ENCODE measurements at regions of chr1 and their contacts with region 1.

Region 1: GRCh38 chr1:112390775-112391602 is 5.0 kb upstream of the CTTNBP2NL start:
- DNase-seq: peak; percentile 83 to 93 (median 86)
- ATAC-seq: peak; percentile 89 to 94 (median 92)
- H3K4me3 ChIP-seq: peak overlapping the region in 3 of 4 donors; percentile 11 to 38 (median 37)
- H3K27ac ChIP-seq: peak overlapping the region in 3 of 4 donors; percentile 32 to 52 (median 45)
- H3K4me1 ChIP-seq: peaks cover 0 to 21% (median 7%) of the 10 kb centered on the region in 3 donors
- H3K27me3 ChIP-seq: no peaks in the 10 kb centered on the region
- CTCF ChIP-seq: peak; percentile 85 to 90 (median 86)

Region 2: DNA sequence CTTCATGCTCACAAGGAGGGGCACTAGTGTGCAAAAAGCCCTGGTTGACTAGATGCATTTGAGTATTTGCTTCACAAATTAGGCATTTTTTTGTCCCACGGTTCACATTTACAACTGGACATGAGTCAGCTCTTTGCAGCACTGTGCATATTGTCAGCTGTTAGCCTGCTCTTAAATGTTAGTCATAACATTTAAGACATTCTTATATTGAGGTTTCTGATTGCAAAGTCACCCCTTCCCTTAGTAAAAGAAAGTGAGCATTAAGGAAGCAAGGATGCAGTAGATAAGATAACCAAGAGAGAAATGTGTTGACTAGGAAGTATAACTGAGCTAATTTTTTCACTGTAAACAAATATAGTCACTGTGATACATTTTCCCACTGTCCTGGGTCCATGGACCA is 127.5 kb before region 1 on chr1:
- intact Hi-C with region 1: no loop called
- DNase-seq: no peak
- ATAC-seq: peak in 2 of 4 donors; percentile 34 to 48
- H3K4me3 ChIP-seq: no peak overlapping the region
- H3K27ac ChIP-seq: no peak overlapping the region
- H3K4me1 ChIP-seq: no peaks in the 10 kb centered on the region
- H3K27me3 ChIP-seq: no peaks in the 10 kb centered on the region
- CTCF ChIP-seq: no peak

Region 3: DNA sequence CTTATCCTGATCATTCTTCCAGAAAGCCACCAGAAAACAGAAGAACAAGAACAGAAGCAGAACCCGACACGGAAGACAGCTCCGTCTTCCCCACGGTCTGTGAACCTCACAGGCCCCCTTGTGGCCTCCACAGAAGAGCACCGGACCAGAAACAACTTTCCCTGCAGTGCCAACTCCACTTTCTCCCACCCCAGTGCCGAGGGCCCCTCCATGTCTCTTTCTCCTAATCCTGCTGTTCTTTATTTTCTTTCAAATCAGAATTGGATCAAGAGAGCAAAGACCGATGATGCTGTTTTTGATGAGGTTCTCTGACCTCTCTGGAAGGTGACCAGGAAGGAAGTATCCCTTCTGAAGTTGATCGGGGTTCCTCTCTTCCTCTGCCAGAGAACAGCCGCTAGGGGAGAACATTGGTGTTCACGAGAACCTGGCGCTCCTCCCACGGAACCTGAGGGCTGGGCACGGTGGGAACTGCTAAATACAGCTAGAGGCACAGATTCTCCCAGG is 53.9 kb before region 1 on chr1:
- intact Hi-C with region 1: no loop called
- DNase-seq: peak; percentile 17 to 62 (median 44)
- ATAC-seq: peak; percentile 86 to 95 (median 92)
- H3K4me3 ChIP-seq: peak overlapping the region in 1 of 4 donors; percentile 17
- H3K27ac ChIP-seq: no peak overlapping the region
- H3K4me1 ChIP-seq: no peaks in the 10 kb centered on the region
- H3K27me3 ChIP-seq: no peaks in the 10 kb centered on the region
- CTCF ChIP-seq: peak; percentile 15 to 53 (median 42)

Region 4: DNA sequence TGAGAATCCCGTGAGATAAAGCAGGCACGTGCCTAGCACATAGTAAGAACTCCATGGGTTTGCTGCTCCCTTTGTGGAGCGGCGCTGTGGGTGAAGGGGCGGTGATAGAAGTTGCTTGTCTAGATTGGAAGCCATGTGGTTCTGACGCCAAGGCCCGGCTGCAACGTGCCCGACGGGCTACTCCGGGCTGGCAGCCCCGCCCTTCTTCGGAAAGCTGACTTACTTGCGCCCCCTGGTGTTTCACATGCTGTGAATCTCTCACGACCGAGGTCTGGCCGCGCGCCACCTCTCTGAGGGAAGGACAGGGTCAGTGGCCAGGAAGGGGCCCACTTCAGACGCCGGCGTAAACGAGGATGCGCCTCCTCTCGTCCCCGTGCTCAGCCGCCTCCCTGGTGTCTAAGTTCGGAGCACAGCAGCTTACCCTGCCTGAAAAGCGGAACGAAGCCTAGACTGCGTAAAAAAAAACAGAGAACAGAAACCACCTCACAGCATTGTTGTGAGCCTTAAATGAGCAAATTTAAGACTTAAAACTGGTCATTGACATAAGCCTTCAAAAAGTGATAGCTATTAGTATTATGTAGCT is 75.2 kb after region 1 on chr1:
- intact Hi-C with region 1: loop called in 2 of 3 experiments (anchors 2 to 5 kb)
- DNase-seq: peak; percentile 90 to 97 (median 96)
- ATAC-seq: peak; percentile 96 to 98 (median 97)
- H3K4me3 ChIP-seq: peak overlapping the region in 2 of 4 donors; percentile 23 to 28
- H3K27ac ChIP-seq: peak overlapping the region in 2 of 4 donors; percentile 32 to 55
- H3K4me1 ChIP-seq: no peaks in the 10 kb centered on the region
- H3K27me3 ChIP-seq: no peaks in the 10 kb centered on the region
- CTCF ChIP-seq: peak; percentile 57 to 84 (median 67)

Measured in pancreas (tissue), 10 donors.